Aorta (tissue), 5 donors: ENCODE measurements at regions of chr6 and their contacts with region 1.

Region 1: GRCh38 chr6:169340395-169340794 is 86.7 kb upstream of the THBS2 start:
- DNase-seq: peak; percentile 83
- ATAC-seq: peak; percentile 68
- H3K4me3 ChIP-seq: no peak overlapping the region
- H3K27ac ChIP-seq: no peak overlapping the region
- H3K4me1 ChIP-seq: no peaks in the 10 kb centered on the region
- H3K27me3 ChIP-seq: no peaks in the 10 kb centered on the region

Region 2: GRCh38 chr6:168916576-168917207 is 423.7 kb before region 1 on chr6:
- intact Hi-C with region 1: loop called in 1 of 2 experiments (anchors 10 kb)
- DNase-seq: peak in 1 of 2 donors; percentile 75
- ATAC-seq: peak; percentile 73
- H3K4me3 ChIP-seq: no peak overlapping the region
- H3K27ac ChIP-seq: no peak overlapping the region
- H3K4me1 ChIP-seq: no peaks in the 10 kb centered on the region
- H3K27me3 ChIP-seq: no peaks in the 10 kb centered on the region